CD4-positive, alpha-beta memory T cell (primary cell): ENCODE measurements at regions of chr5 and their contacts with region 1.

Region 1: DNA sequence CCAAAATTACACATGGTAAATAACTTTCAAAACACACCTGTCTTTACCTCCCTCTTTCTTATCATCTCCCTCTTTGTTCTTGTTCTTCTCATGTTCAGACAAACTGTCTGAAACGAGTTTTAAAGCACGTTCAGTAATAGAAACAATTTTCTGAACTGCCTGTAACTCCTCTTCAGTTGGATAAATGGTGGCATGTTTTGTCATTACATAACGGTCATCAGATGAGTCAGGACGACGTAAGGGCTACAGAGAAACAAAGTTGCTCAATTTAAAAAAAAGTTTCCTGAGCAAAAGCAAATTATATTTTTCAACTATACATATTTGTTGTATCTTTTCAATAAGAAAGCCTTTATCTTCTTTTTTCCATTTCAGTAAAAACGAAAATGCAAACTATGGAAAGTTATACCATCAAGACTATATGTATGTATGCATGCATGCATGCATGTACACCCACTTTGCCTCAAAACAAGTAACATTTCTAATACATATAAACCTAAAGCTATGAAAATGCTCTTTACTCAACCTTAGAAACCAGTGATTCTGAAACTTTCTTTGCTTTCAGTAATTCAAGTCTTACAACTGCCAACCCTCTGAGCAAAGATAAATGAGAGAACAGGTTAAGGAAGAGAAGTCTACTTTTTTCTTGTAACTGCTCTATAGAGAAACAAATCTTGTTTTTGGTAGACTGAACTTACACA is 56.0 kb downstream of the ZFR start:
- DNase-seq: no peak
- H3K4me3 ChIP-seq: no peak overlapping the region
- H3K4me3 Mint-ChIP-seq: no peak overlapping the region
- H3K27ac ChIP-seq: no peak overlapping the region
- H3K27ac Mint-ChIP-seq: peak overlapping the region in 6 of 7 donors; percentile 25 to 79 (median 72)
- H3K4me1 ChIP-seq: no peaks in the 10 kb centered on the region
- H3K4me1 Mint-ChIP-seq: peaks cover 0 to 9% (median 5%) of the 10 kb centered on the region in 4 donors
- H3K27me3 ChIP-seq: no peaks in the 10 kb centered on the region
- H3K27me3 Mint-ChIP-seq: no peaks in the 10 kb centered on the region

Region 2: DNA sequence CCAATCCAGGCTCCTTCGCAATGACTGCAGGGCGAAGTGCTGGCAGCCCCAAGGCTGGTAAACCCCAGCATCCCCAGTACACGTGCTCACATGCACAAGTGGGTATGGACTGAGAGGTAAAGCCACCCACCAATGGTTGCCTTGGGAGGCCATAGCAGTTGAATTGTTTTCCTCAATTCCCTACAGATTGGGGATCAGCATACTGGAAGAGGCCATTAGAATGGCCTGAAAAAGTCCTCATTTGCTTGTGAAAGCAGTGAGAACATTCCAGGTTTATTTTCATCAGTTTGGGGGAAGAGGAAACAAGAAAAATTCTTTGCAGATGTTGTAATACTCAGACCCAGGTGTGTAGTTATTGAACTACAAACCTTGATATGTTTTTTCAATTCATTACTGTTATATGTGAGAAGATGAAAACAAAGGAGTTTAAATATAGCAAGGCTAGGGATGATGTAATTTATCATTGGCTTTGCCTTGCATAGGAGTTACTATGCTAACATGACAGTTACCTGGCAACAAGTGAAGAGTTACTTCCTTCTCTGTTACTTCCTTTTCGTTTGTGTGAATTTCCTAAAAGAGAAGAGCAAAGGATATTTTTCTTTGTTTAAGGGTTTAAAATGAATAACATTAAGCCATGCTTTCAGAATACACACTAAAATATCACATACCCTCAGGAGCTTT is 112.3 kb before region 1 on chr5:
- CTCF ChIA-PET with region 1: no interaction called
- POLR2A ChIA-PET with region 1: no interaction called
- intact Hi-C with region 1: no loop called
- DNase-seq: peak in 4 of 5 donors; percentile 15 to 40 (median 18)
- H3K4me3 ChIP-seq: no peak overlapping the region
- H3K4me3 Mint-ChIP-seq: peak overlapping the region in 4 of 8 donors; percentile 21 to 57 (median 27)
- H3K27ac ChIP-seq: no peak overlapping the region
- H3K27ac Mint-ChIP-seq: peak overlapping the region; percentile 64 to 89 (median 85)
- H3K4me1 ChIP-seq: peaks cover 38% of the 10 kb centered on the region
- H3K4me1 Mint-ChIP-seq: peaks cover 25 to 48% (median 34%) of the 10 kb centered on the region in 4 donors
- H3K27me3 ChIP-seq: no peaks in the 10 kb centered on the region
- H3K27me3 Mint-ChIP-seq: no peaks in the 10 kb centered on the region

Region 3: DNA sequence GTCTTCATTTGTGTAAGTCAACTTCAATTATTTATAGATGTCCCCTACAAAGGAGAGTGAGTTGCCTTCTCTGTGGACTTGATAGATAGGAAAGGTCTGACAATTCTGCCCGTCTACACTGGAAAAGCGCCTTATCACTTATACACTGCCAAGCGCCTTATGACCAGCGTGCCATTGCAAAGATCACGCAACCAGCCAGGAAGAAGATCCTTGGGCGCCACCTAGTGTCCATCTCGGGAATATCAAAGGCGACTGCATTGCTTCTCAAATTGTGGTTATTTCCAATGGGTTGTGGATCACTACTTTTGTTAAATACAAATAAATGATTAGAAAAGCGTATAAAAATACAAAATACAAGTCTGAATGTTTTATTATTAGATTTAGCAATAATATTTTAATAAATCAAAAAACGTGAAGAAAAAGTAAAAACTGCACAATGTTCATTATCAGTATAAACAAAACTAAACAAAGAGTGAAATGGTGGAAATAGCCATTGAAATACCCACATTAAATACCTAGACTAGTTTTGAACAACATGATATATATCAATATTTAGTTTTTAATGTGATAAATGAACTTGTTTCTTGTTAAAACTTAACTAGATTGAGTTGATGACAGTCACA is 224.6 kb after region 1 on chr5:
- CTCF ChIA-PET with region 1: no interaction called
- POLR2A ChIA-PET with region 1: no interaction called
- intact Hi-C with region 1: loop called (anchors 5 kb)
- DNase-seq: peak; percentile 72 to 79 (median 76)
- H3K4me3 ChIP-seq: no peak overlapping the region
- H3K4me3 Mint-ChIP-seq: no peak overlapping the region
- H3K27ac ChIP-seq: no peak overlapping the region
- H3K27ac Mint-ChIP-seq: peak overlapping the region in 2 of 7 donors; percentile 7 to 65
- H3K4me1 ChIP-seq: no peaks in the 10 kb centered on the region
- H3K4me1 Mint-ChIP-seq: peaks cover 2 to 24% (median 14%) of the 10 kb centered on the region in 4 donors
- H3K27me3 ChIP-seq: no peaks in the 10 kb centered on the region
- H3K27me3 Mint-ChIP-seq: no peaks in the 10 kb centered on the region